GM12878 (cell line): ENCODE measurements at regions of chr16 and their contacts with region 1.

Region 1: DNA sequence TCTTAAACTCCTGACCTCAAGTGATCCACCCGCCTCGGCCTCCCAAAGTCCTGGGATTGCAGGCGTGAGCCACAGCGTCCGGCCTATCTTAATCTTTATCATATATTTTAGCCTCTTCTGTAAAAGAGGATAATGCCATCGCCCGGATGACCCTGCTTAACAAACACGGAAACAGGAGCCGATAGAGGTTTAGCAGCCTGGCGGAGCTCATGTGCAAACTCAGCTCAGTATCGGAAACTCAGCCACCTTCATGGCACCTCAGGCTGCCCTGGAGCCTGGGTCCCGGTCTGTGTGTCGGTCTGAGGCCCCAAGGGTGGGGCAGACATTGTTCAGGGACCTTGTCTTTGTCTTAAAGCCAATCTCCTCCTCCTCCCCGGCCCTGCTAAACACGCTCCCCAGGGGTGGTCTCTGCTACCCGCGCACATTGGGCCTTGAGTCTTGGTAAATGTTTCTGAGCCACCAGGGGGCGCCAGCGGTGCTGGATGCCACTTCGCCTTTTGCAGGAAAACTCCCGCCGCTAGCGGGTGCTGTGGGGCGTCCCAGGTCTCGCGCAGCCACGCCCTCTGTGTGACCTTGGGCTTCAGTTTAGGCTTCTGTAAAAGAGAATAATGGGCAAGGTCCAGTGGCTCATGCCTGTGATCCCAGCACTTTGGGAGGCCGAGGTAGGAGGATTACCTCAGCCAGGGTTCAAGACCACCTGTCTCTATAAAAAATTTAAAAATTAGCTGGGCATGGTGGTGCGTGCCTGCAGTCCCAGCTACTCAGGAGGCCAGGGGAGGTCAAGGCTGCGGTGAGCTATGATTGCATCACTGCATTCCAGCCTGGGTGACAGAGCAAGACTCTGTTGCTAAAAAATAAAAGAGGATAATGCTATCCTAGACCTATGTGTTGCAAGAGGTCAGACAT is 2.7 kb downstream of the CETP start:
- DNase-seq: no peak
- ATAC-seq: peak; percentile 92
- H3K4me3 ChIP-seq: no peak overlapping the region
- H3K27ac ChIP-seq: no peak overlapping the region
- H3K4me1 ChIP-seq: peaks cover 7% of the 10 kb centered on the region
- H3K27me3 ChIP-seq: no peaks in the 10 kb centered on the region
- CTCF ChIP-seq: peak; percentile 100; a peak in 5 of 6 replicates
- EP300 ChIP-seq: no peak
- POLR2A ChIP-seq: no peak
- RAD21 ChIP-seq: peak; percentile 97

Region 2: DNA sequence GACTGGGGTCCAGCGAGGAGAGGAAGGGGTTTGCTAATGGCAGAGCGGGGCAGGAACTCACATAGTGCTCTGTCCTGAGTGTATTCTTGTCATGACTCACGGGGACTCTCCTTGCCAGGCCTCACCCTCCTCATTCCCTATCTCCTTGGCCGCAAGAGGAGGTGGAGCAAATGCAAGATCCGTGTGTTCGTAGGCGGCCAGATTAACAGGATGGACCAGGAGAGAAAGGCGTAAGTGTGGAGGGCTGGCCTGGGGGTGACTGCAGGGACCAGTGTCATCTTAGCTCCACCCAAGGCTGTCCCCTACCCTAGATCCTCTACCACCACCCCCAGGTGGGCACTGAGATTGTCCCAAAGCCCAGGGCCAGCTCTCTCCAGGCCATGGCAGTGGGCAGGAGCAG is 70.1 kb before region 1 on chr16:
- CTCF ChIA-PET with region 1: no interaction called
- POLR2A ChIA-PET with region 1: no interaction called
- RAD21 ChIA-PET with region 1: no interaction called
- SMC1A ChIA-PET with region 1: no interaction called
- in situ Hi-C with region 1: no loop called
- intact Hi-C with region 1: no loop called
- DNase-seq: no peak
- ATAC-seq: no peak
- H3K4me3 ChIP-seq: no peak overlapping the region
- H3K27ac ChIP-seq: no peak overlapping the region
- H3K4me1 ChIP-seq: peaks cover 11% of the 10 kb centered on the region
- H3K27me3 ChIP-seq: no peaks in the 10 kb centered on the region
- CTCF ChIP-seq: no peak
- EP300 ChIP-seq: no peak
- POLR2A ChIP-seq: no peak
- RAD21 ChIP-seq: no peak

Region 3: GRCh38 chr16:56938422-56939156 is 25.9 kb before region 1 on chr16:
- CTCF ChIA-PET with region 1: interaction called, 8 read pairs
- POLR2A ChIA-PET with region 1: interaction called, 3 read pairs
- RAD21 ChIA-PET with region 1: interaction called, 11 read pairs
- SMC1A ChIA-PET with region 1: interaction called, 5 read pairs
- in situ Hi-C with region 1: no loop called
- intact Hi-C with region 1: no loop called
- DNase-seq: no peak
- ATAC-seq: peak; percentile 45
- H3K4me3 ChIP-seq: peak overlapping the region; percentile 24
- H3K27ac ChIP-seq: peak overlapping the region; percentile 5
- H3K4me1 ChIP-seq: peaks cover 56% of the 10 kb centered on the region
- H3K27me3 ChIP-seq: no peaks in the 10 kb centered on the region
- CTCF ChIP-seq: no peak
- EP300 ChIP-seq: peak; percentile 35 to 55; a peak in 2 of 4 replicates
- POLR2A ChIP-seq: peak; percentile 56
- RAD21 ChIP-seq: no peak

Region 4: DNA sequence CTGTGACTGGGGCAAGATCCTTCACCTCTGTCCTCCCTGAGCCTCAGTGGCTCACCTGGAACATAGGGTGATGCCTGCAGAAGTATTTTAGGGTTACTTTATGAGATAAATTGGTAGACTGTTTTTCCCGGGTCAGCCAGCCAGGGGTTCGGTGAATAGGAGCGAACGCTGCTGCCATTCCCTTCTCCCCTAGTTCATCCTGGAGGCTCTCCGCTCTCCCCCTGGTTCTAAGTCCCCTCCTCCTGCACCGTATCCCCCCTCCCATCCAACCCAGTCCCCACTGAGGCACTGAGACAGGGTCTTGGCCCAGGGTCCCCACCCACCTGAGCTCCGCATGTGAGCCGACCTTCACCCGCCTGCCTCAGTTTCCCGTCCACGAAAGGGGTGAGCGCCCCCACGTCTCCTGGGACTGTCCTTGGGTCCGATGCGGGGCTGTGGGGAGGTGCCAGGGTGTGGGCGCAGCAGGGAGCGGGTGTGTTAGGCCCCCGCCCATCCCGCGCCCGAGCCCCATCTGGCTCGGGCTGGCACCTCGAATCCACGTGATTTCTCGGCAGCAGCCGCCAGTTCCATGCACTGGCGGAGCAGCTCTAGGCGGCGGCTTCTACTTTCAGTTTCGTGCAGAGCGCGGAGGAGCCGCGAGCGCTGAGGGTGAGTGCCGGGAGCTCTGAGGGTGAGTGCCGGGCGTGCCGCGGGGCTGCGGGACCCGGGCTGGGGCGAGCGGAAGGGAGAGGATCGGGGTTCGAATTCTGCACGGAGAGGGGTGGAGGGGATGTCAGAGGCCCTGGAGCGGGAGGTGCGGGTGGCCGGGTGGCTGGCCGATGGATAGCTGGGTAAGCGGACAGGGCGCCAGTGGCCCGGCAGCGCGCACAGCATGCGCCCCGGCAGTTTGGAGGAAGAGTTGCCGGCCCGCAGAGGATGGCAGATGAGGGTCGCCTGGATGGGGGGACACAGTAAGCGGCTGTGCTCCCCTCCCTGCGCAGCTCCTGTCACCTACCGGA is 24.8 kb after region 1 on chr16 and contains the start of gene NLRC5:
- CTCF ChIA-PET with region 1: interaction called, 420 read pairs
- POLR2A ChIA-PET with region 1: interaction called, 343 read pairs
- RAD21 ChIA-PET with region 1: interaction called, 473 read pairs
- SMC1A ChIA-PET with region 1: interaction called, 381 read pairs
- in situ Hi-C with region 1: no loop called
- intact Hi-C with region 1: no loop called
- DNase-seq: no peak
- ATAC-seq: peak; percentile 83
- H3K4me3 ChIP-seq: peak within 1 kb of the TSS; percentile 79
- H3K27ac ChIP-seq: peak within 1 kb of the TSS; percentile 88
- H3K4me1 ChIP-seq: peaks cover 32% of the 10 kb centered on the region
- H3K27me3 ChIP-seq: no peaks in the 10 kb centered on the region
- CTCF ChIP-seq: no peak
- EP300 ChIP-seq: no peak
- POLR2A ChIP-seq: peak; percentile 87
- RAD21 ChIP-seq: no peak
- polyA plus RNA-seq, gene NLRC5: 13.1 to 14.2 TPM

Region 5: GRCh38 chr16:57013229-57013628 is 48.7 kb after region 1 on chr16:
- CTCF ChIA-PET with region 1: interaction called, 18 read pairs
- POLR2A ChIA-PET with region 1: interaction called, 8 read pairs
- RAD21 ChIA-PET with region 1: interaction called, 473 read pairs
- SMC1A ChIA-PET with region 1: interaction called, 604 read pairs
- in situ Hi-C with region 1: no loop called
- intact Hi-C with region 1: loop called (anchors 2 kb)
- DNase-seq: no peak
- ATAC-seq: no peak
- H3K4me3 ChIP-seq: no peak overlapping the region
- H3K27ac ChIP-seq: peak overlapping the region; percentile 95
- H3K4me1 ChIP-seq: peaks cover 47% of the 10 kb centered on the region
- H3K27me3 ChIP-seq: no peaks in the 10 kb centered on the region
- CTCF ChIP-seq: no peak
- EP300 ChIP-seq: no peak
- POLR2A ChIP-seq: no peak
- RAD21 ChIP-seq: no peak

Region 6: GRCh38 chr16:57045694-57046381 is 81.3 kb after region 1 on chr16:
- CTCF ChIA-PET with region 1: interaction called, 212 read pairs
- POLR2A ChIA-PET with region 1: interaction called, 53 read pairs
- RAD21 ChIA-PET with region 1: interaction called, 115 read pairs
- SMC1A ChIA-PET with region 1: interaction called, 111 read pairs
- in situ Hi-C with region 1: no loop called
- intact Hi-C with region 1: loop called (anchors 1 kb)
- DNase-seq: peak; percentile 55
- ATAC-seq: peak; percentile 43
- H3K4me3 ChIP-seq: no peak overlapping the region
- H3K27ac ChIP-seq: peak overlapping the region; percentile 76
- H3K4me1 ChIP-seq: peaks cover 90% of the 10 kb centered on the region
- H3K27me3 ChIP-seq: no peaks in the 10 kb centered on the region
- CTCF ChIP-seq: peak; percentile 83 to 89 (median 83)
- EP300 ChIP-seq: peak; percentile 42 to 50; a peak in 1 of 4 replicates
- POLR2A ChIP-seq: peak; percentile 41; the same call in 1 of the 2 replicates
- RAD21 ChIP-seq: peak; percentile 88

Region 7: GRCh38 chr16:57084257-57084770 is 119.8 kb after region 1 on chr16:
- CTCF ChIA-PET with region 1: interaction called, 40 read pairs
- POLR2A ChIA-PET with region 1: no interaction called
- RAD21 ChIA-PET with region 1: interaction called, 3 read pairs
- SMC1A ChIA-PET with region 1: interaction called, 8 read pairs
- in situ Hi-C with region 1: no loop called
- intact Hi-C with region 1: loop called (anchors 1 kb)
- DNase-seq: peak; percentile 25
- ATAC-seq: peak; percentile 89
- H3K4me3 ChIP-seq: no peak overlapping the region
- H3K27ac ChIP-seq: no peak overlapping the region
- H3K4me1 ChIP-seq: no peaks in the 10 kb centered on the region
- H3K27me3 ChIP-seq: no peaks in the 10 kb centered on the region
- CTCF ChIP-seq: peak; percentile 95 to 100 (median 98)
- EP300 ChIP-seq: no peak
- POLR2A ChIP-seq: peak; percentile 54
- RAD21 ChIP-seq: peak; percentile 95

Region 8: DNA sequence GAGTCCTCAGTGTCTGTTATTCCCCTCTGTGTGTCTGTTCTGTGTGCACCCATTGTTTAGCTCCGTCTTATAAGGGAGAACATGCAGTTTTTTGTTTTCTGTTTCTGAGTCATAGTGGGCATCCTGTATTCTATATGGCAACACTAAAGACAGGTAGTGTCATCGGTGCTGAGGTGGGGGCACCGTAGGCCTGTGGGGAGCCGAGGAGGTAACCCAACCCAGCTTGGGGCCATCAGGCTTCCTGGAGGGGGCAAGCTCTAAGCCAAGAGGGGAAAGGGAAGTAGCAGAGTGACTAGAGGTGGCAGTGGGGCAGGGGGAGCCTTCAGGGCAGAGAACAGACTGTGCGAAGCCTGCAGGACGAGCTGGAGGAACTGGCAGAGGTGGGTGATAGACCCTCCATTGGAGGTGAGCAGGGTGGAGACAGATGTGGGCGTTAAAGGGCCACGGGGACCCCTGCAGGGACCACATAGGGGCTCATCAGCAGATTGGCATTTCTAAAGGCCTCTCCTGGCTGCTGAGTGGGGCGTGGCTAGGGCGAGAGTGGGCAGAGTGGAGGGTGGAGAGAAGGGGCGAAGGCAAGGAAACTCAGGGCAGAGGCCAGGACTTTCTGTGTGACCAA is 164.4 kb after region 1 on chr16:
- CTCF ChIA-PET with region 1: no interaction called
- POLR2A ChIA-PET with region 1: no interaction called
- RAD21 ChIA-PET with region 1: no interaction called
- SMC1A ChIA-PET with region 1: no interaction called
- in situ Hi-C with region 1: no loop called
- intact Hi-C with region 1: no loop called
- DNase-seq: peak; percentile 28
- ATAC-seq: peak; percentile 75
- H3K4me3 ChIP-seq: no peak overlapping the region
- H3K27ac ChIP-seq: no peak overlapping the region
- H3K4me1 ChIP-seq: peaks cover 31% of the 10 kb centered on the region
- H3K27me3 ChIP-seq: no peaks in the 10 kb centered on the region
- CTCF ChIP-seq: no peak
- EP300 ChIP-seq: no peak
- POLR2A ChIP-seq: no peak
- RAD21 ChIP-seq: no peak

Region 9: GRCh38 chr16:57325458-57325857 is 361.0 kb after region 1 on chr16:
- CTCF ChIA-PET with region 1: no interaction called
- POLR2A ChIA-PET with region 1: no interaction called
- RAD21 ChIA-PET with region 1: no interaction called
- SMC1A ChIA-PET with region 1: no interaction called
- in situ Hi-C with region 1: no loop called
- intact Hi-C with region 1: no loop called
- DNase-seq: no peak
- ATAC-seq: no peak; the same call in 1 of the 3 replicates
- H3K4me3 ChIP-seq: no peak overlapping the region
- H3K27ac ChIP-seq: no peak overlapping the region
- H3K4me1 ChIP-seq: peaks cover 4% of the 10 kb centered on the region; the same call in 1 of the 2 replicates
- H3K27me3 ChIP-seq: no peaks in the 10 kb centered on the region
- CTCF ChIP-seq: no peak
- EP300 ChIP-seq: no peak
- POLR2A ChIP-seq: no peak
- RAD21 ChIP-seq: no peak